Psoas muscle (tissue), 8 donors: ENCODE measurements at regions of chr9 and their contacts with region 1.

Region 1: DNA sequence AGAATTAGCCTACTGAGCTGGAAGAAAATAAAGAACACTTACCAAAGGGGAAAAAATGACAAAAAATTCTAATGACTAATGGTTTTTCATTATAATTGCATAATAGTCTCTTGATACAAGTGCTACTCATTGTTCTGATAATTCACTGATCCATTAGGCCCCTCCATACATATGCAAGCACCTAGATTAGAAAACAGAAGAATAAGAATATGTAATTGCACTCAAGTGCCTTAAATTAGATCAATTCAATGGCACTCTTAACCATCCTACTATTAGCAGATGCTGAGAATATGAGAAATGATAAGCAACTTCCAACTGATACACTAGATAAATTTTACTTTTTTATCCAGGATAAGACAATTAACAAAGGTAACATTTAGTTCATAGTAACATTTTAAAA is 440.9 kb upstream of the C9orf72 start:
- DNase-seq: no peak
- ATAC-seq: no peak
- H3K4me3 ChIP-seq: no peak overlapping the region
- H3K27ac ChIP-seq: no peak overlapping the region
- H3K4me1 ChIP-seq: no peaks in the 10 kb centered on the region
- H3K27me3 ChIP-seq: no peaks in the 10 kb centered on the region
- CTCF ChIP-seq: no peak

Region 2: DNA sequence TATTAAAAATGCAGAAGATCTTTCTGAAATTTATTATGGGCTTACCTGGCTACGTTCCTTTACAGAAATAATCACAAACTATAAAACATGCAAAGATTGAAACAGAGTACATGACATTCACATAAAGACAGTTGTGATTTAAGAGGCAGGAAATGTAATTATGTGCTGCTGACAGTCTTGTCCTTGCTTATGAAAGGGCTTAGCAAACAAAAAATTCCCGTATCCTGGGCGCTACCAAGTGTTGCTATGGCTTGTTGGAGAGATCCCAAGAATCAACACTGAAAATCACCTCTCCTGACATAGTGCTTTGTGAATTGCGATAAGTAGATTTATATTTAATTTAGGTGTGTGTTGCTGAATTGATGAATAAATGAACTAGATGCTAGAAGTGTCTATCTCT is 88.4 kb before region 1 on chr9:
- intact Hi-C with region 1: loop called in 1 of 2 experiments (anchors 10 kb)
- DNase-seq: no peak
- ATAC-seq: no peak
- H3K4me3 ChIP-seq: no peak overlapping the region
- H3K27ac ChIP-seq: no peak overlapping the region
- H3K4me1 ChIP-seq: no peaks in the 10 kb centered on the region
- H3K27me3 ChIP-seq: no peaks in the 10 kb centered on the region
- CTCF ChIP-seq: no peak

Region 3: GRCh38 chr9:28037968-28038367 is 23.8 kb after region 1 on chr9:
- intact Hi-C with region 1: no loop called
- DNase-seq: no peak
- ATAC-seq: no peak
- H3K4me3 ChIP-seq: no peak overlapping the region
- H3K27ac ChIP-seq: no peak overlapping the region
- H3K4me1 ChIP-seq: no peaks in the 10 kb centered on the region
- H3K27me3 ChIP-seq: no peaks in the 10 kb centered on the region
- CTCF ChIP-seq: no peak